ENCODE measurements at regions of chr10 and their contacts with region 1.

Region 1: GRCh38 chr10:23067939-23068775 is 27.2 kb upstream of the MSRB2 start:
- DNase-seq: peak; percentile 63
- H3K4me3 ChIP-seq: no peak overlapping the region
- H3K27ac ChIP-seq: no peak overlapping the region
- H3K4me1 ChIP-seq: no peaks in the 10 kb centered on the region
- CTCF ChIP-seq: peak; percentile 89

Region 2: DNA sequence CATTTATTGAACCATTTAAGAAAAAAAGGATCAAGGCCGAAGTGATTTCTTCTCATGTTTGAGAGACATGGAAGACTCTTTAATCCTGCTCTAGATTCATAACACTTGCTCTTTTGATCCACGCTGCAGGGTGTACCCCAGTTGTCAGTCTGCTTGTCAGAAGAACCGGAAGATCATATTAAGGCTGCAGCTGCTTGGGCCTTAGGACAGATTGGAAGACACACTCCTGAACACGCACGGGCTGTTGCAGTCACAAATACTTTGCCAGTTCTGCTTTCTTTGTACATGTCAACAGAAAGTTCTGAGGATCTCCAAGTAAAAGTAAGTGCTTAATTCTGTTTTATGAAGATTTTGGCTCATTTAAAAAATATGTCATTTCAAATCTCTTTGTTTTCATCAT is 676.6 kb before region 1 on chr10:
- CTCF ChIA-PET with region 1: no interaction called
- POLR2A ChIA-PET with region 1: no interaction called
- intact Hi-C with region 1: no loop called
- DNase-seq: no peak
- H3K4me3 ChIP-seq: no peak overlapping the region
- H3K27ac ChIP-seq: no peak overlapping the region
- H3K4me1 ChIP-seq: no peaks in the 10 kb centered on the region
- CTCF ChIP-seq: no peak

Region 3: DNA sequence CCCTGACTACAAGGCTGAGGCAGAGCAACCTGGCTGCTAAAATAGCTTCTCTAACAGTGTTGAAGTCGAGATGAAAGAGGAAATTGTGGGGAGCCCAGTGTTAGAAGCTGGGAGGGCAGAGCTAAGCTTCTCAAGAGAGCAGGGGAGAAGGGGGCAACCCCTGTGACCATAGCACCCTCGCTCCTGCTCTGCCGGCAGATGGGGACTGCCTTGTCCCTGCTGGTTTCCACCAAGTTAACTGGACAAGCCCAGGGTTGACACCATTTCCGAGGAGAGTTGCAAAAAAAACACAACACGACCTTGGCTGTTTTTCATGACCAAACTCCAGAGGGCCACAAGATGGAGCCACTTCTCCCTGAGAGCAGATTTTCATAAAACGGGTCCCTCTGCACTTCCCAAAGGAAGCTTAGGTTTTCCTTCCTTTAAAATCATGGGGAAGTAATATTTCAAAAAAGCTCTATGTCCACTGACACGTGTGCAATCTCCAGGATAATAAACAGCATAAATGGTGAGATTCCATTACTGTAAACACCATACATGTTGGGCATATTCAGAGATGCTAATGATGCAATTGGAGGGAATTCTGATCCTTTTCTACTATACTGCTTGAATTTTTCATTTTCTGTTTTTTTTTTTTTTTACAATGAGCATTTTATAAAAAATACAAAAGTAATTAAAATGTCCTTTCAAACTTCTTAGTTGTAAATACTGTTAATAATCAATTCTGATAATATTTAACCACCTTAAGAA is 494.2 kb before region 1 on chr10:
- CTCF ChIA-PET with region 1: no interaction called
- POLR2A ChIA-PET with region 1: no interaction called
- intact Hi-C with region 1: loop called (anchors 10 kb)
- DNase-seq: peak; percentile 30
- H3K4me3 ChIP-seq: no peak overlapping the region
- H3K27ac ChIP-seq: no peak overlapping the region
- H3K4me1 ChIP-seq: no peaks in the 10 kb centered on the region
- CTCF ChIP-seq: peak; percentile 83

Measured in OCI-LY7 (cell line).